Mammary epithelial cell (primary cell): ENCODE measurements at regions of chr5 and their contacts with region 1.

Region 1: DNA sequence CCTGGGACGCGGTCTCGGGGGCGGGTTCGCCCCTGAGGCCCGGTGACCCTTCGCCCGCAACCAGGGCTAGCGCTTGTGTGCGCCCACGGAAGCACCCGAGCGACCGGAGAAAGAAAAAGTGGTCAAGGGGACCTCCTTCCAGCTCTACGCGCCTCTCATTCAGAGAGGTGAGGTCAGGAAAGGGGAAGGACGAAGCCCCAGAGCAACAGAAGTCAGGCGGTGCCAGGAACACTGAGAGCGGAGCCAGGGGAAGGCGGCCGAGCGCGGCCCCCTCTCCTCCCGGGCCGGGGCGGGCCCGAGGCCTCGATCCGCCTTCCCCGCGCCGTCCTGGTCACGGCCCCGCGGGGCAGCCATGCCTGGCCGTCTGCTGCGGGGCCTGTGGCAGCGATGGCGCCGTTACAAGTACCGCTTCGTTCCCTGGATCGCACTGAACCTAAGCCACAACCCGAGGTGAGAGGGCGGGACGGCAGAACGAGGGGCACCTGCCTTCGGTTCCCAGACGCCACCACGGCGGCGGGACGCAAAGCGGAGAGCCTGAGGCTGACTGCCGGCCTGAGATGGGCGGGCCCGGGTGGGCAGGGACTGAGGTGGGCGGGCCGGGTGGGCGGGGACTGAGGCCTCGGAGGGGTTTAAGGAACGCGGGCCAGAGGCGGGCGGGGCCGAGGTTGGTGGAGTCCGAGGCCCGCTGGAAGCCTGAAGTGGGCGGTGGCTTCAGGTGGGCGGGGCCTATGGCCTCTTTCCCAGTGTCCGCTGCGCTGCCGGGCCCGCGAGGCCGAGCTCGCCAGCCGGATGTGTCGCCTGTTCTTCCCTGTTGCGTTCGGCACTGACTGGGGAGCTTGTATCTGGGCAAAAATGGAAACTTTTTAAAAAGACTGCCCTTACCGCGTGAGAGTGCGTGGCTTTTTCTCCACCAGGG is at the start of gene SETD9:
- DNase-seq: peak; percentile 95
- H3K4me3 ChIP-seq: peak within 1 kb of the TSS; percentile 69 to 97 (median 79)
- H3K27ac ChIP-seq: peak within 1 kb of the TSS; percentile 92
- H3K4me1 ChIP-seq: peaks cover 5% of the 10 kb centered on the region
- H3K27me3 ChIP-seq: no peaks in the 10 kb centered on the region
- CTCF ChIP-seq: no peak
- total RNA-seq, gene SETD9: 10.5 to 10.7 TPM

Region 2: GRCh38 chr5:56856541-56857178 is 52.9 kb before region 1 on chr5:
- CTCF ChIA-PET with region 1: no interaction called
- dilution Hi-C with region 1: loop called (anchors 5 kb)
- in situ Hi-C with region 1: no loop called
- intact Hi-C with region 1: no loop called
- DNase-seq: no peak
- H3K4me3 ChIP-seq: no peak overlapping the region
- H3K27ac ChIP-seq: no peak overlapping the region
- H3K4me1 ChIP-seq: peaks cover 4% of the 10 kb centered on the region
- H3K27me3 ChIP-seq: no peaks in the 10 kb centered on the region
- CTCF ChIP-seq: no peak

Region 3: DNA sequence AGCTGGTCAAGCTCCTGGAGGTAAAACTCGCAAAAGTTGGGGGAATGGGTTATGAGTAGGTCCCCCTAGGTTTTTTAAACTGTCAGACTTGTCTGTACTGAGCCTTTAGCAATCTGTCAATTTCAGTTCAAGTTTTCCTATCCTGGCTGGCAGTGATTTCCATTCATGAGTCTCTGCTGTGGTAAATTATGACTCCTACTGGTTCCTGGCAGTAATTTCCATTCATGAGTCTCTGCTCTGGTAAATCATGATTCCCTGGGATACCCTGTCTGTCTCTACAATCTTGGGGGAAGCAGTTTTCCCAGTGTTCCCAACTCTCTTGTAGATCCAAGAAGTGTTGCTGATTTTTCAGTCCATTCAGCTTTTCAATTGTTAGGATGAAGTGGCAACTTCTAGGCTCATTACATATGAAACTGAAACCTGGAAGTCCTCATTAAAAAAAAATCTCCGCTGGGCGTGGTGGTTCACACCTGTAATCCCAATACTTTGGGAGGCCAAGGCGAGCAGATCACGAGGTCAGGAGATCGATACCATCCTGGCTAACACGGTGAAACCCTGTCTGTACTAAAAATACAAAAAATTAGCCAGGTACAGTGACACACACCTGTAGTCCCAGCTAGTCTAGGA is 173.0 kb after region 1 on chr5:
- CTCF ChIA-PET with region 1: no interaction called
- dilution Hi-C with region 1: no loop called
- in situ Hi-C with region 1: no loop called
- intact Hi-C with region 1: loop called (anchors 2 kb)
- DNase-seq: peak; percentile 35
- H3K4me3 ChIP-seq: no peak overlapping the region
- H3K27ac ChIP-seq: no peak overlapping the region
- H3K4me1 ChIP-seq: no peaks in the 10 kb centered on the region
- H3K27me3 ChIP-seq: no peaks in the 10 kb centered on the region
- CTCF ChIP-seq: peak; percentile 20 to 67

Region 4: GRCh38 chr5:57173185-57174127 is 263.9 kb after region 1 on chr5 and contains the start of gene GPBP1:
- CTCF ChIA-PET with region 1: no interaction called
- dilution Hi-C with region 1: no loop called
- in situ Hi-C with region 1: no loop called
- intact Hi-C with region 1: loop called (anchors 1 kb)
- DNase-seq: peak; percentile 99
- H3K4me3 ChIP-seq: peak within 1 kb of the TSS; percentile 94 to 98 (median 96)
- H3K27ac ChIP-seq: peak within 1 kb of the TSS; percentile 99
- H3K4me1 ChIP-seq: peaks cover 23% of the 10 kb centered on the region
- H3K27me3 ChIP-seq: no peaks in the 10 kb centered on the region
- CTCF ChIP-seq: no peak
- total RNA-seq, gene GPBP1: 39.7 to 55.6 TPM